ENCODE measurements at regions of chr1 and their contacts with region 1.

Region 1: GRCh38 chr1:207698822-207699483 is 52.9 kb upstream of the CD46 start:
- DNase-seq: peak; percentile 93
- ATAC-seq: peak; percentile 96
- H3K4me3 ChIP-seq: no peak overlapping the region
- H3K27ac ChIP-seq: no peak overlapping the region
- H3K4me1 ChIP-seq: no peaks in the 10 kb centered on the region
- H3K27me3 ChIP-seq: no peaks in the 10 kb centered on the region
- CTCF ChIP-seq: peak; percentile 96

Region 2: GRCh38 chr1:207565546-207566358 is 133.2 kb before region 1 on chr1:
- CTCF ChIA-PET with region 1: interaction called, 11 read pairs
- POLR2A ChIA-PET with region 1: no interaction called
- intact Hi-C with region 1: no loop called
- DNase-seq: peak; percentile 76
- ATAC-seq: peak; percentile 97
- H3K4me3 ChIP-seq: no peak overlapping the region
- H3K27ac ChIP-seq: no peak overlapping the region
- H3K4me1 ChIP-seq: no peaks in the 10 kb centered on the region
- H3K27me3 ChIP-seq: peaks cover 13% of the 10 kb centered on the region; the same call in 1 of the 2 replicates
- CTCF ChIP-seq: peak; percentile 65

Region 3: DNA sequence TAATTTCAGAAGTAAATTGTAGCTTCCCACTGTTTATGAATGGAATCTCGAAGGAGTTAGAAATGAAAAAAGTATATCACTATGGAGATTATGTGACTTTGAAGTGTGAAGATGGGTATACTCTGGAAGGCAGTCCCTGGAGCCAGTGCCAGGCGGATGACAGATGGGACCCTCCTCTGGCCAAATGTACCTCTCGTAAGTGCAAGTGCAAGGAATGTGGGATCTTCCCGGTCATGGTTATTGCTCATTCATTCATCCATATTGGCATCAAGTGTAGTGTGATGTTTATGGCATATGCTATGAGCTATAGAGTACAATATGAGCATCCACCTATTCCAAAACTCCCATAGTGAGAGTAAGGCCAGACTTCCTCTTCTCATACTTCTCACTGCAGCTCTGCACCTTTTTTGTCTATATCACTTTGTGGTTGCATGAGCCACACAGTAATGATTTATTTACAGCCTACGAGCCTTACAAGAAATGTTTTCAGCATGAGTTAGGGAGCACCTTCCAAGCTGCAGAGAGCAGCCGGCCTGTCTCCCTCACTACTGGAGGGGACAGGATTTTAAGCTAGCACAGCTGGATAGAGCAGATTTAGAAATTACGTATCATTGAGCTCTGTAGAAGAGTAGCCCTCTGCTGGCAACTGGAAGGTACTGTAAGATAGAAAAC is 78.9 kb before region 1 on chr1:
- CTCF ChIA-PET with region 1: interaction called, 10 read pairs
- POLR2A ChIA-PET with region 1: no interaction called
- intact Hi-C with region 1: no loop called
- DNase-seq: peak; percentile 81
- ATAC-seq: peak; percentile 97
- H3K4me3 ChIP-seq: no peak overlapping the region
- H3K27ac ChIP-seq: no peak overlapping the region
- H3K4me1 ChIP-seq: no peaks in the 10 kb centered on the region
- H3K27me3 ChIP-seq: peaks cover 36% of the 10 kb centered on the region
- CTCF ChIP-seq: peak; percentile 96

Region 4: GRCh38 chr1:207654320-207654719 is 44.6 kb before region 1 on chr1:
- CTCF ChIA-PET with region 1: interaction called, 12 read pairs
- POLR2A ChIA-PET with region 1: no interaction called
- intact Hi-C with region 1: loop called (anchors 1 kb)
- DNase-seq: peak; percentile 58
- ATAC-seq: peak; percentile 79
- H3K4me3 ChIP-seq: no peak overlapping the region
- H3K27ac ChIP-seq: no peak overlapping the region
- H3K4me1 ChIP-seq: no peaks in the 10 kb centered on the region
- H3K27me3 ChIP-seq: peaks cover 65% of the 10 kb centered on the region
- CTCF ChIP-seq: peak; percentile 65

Region 5: DNA sequence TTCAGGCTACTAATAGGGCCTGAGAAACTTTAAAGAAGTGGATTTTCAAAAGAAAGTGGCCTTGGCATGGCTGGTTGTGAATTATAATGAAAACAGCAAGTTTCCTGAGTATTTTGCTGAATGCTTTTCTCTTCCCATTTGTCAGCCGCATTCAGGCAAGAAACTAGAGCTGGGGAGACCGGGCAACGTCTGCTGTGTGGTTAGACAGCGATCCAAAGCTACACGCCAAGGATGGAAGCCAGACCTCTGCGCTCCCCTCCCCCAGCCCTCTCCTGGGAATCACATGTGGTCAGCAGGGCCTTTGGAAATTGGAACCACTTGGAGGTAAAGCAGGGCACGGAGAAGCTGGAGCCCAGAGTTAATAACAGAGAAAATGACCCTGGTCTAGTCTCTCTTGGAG is 326.1 kb after region 1 on chr1:
- CTCF ChIA-PET with region 1: no interaction called
- POLR2A ChIA-PET with region 1: no interaction called
- intact Hi-C with region 1: no loop called
- DNase-seq: no peak
- ATAC-seq: no peak
- H3K4me3 ChIP-seq: no peak overlapping the region
- H3K27ac ChIP-seq: no peak overlapping the region
- H3K4me1 ChIP-seq: no peaks in the 10 kb centered on the region
- H3K27me3 ChIP-seq: no peaks in the 10 kb centered on the region
- CTCF ChIP-seq: no peak

Measured in PC-3 (cell line).